ENCODE measurements at regions of chr3 and their contacts with region 1.

Region 1: DNA sequence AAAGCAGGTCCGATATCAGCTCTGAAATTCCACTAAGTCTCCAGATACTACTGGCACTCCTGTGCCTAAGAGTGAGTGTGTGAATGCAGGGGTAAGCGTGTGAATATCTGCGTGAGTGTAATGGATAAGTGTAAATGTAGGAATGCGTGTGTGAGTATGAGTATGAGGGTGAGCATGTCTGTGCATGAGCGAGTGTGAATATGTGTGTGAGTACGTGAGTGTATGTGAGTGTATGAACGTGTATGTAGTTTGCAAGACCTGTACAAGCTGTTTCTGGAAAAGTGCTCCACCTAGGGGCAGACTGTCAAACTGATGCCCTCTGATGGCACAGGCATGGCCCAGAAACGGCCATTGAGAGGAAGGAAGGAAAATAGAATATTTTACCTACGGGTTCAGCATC is 24.4 kb upstream of the FRMD4B start:
- DNase-seq: peak; percentile 78
- H3K4me3 ChIP-seq: peak overlapping the region in 1 of 8 donors; percentile 24
- H3K27ac ChIP-seq: peak overlapping the region in 6 of 8 donors; percentile 9 to 78 (median 68)
- H3K4me1 ChIP-seq: peaks cover 0 to 28% (median 6%) of the 10 kb centered on the region in 6 donors
- H3K27me3 ChIP-seq: no peaks in the 10 kb centered on the region
- CTCF ChIP-seq: peak; percentile 59 to 90 (median 81)
- POLR2A ChIP-seq: no peak

Region 2: DNA sequence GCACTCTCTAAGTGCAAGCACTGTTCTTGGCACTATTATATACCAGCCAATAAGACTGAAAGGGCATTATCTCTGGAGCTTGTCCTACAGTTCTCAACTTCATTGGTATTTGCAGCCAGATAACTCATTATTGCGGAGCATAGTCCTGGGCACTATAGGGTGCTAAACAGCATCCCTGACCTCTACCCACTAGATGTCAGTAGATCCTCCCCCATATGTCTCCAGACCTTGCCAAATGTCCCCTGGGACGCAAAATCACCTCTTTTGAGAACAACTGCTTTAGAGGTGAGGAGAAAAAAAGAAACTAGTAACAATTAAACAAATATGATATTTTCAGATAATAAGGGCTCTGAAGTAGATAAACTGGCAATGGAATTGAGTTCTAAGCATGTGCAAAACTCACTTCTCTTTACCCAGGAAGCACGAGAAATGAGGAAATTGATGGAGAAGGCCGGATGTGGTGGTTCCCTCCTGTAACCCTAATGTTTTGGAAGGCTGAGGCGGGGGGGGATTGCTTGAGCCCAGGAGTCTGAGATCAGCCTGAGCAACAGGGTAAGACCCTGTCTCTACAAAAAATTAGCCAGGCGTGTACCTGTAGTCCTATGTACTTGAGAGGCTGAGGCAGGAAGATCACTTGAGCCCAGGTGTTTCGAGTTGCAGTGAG is 85.8 kb before region 1 on chr3:
- intact Hi-C with region 1: loop called (anchors 5 kb)
- DNase-seq: no peak
- H3K4me3 ChIP-seq: no peak overlapping the region
- H3K27ac ChIP-seq: peak overlapping the region in 5 of 8 donors; percentile 15 to 70 (median 39)
- H3K4me1 ChIP-seq: peaks cover 15 to 85% (median 57%) of the 10 kb centered on the region in 6 donors
- H3K27me3 ChIP-seq: no peaks in the 10 kb centered on the region
- CTCF ChIP-seq: peak in 7 of 11 experiments; percentile 7 to 52 (median 39)
- POLR2A ChIP-seq: no peak

Measured in spleen (tissue), 13 donors.